HepG2 (cell line): ENCODE measurements at regions of chr17 and their contacts with region 1.

Region 1: DNA sequence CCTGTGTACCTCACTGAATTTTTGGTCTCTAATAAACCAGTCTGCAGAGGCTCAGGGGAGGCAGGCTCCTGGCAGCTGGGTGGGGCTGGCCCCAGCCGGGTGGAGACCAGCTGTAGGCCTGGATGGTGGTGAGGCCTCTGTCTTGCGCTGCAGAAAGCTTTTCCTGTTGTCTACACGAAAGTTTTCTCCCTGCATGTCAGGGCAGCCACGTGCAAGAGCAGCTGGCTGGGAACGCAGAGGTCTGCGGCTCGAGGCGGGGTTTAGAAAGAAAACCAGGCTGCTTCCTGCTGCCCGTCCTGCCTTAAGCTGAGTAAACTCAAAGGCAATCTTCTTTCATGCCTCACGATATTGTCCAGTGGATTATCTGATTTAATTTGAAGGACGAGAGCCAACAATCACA is 2.4 kb downstream of the SERPINF1 start:
- DNase-seq: no peak
- ATAC-seq: no peak
- H3K4me3 ChIP-seq: peak overlapping the region; percentile 33 to 94 (median 88); a peak in 5 of 6 replicates
- H3K27ac ChIP-seq: peak overlapping the region; percentile 99
- H3K4me1 ChIP-seq: peaks cover 64% of the 10 kb centered on the region
- H3K27me3 ChIP-seq: no peaks in the 10 kb centered on the region
- CTCF ChIP-seq: no peak
- EP300 ChIP-seq: no peak
- POLR2A ChIP-seq: 0 out of 4 replicates have a peak, but pooled peaks of 1 of the 2 experiments have one; percentile 18
- RAD21 ChIP-seq: no peak

Region 2: DNA sequence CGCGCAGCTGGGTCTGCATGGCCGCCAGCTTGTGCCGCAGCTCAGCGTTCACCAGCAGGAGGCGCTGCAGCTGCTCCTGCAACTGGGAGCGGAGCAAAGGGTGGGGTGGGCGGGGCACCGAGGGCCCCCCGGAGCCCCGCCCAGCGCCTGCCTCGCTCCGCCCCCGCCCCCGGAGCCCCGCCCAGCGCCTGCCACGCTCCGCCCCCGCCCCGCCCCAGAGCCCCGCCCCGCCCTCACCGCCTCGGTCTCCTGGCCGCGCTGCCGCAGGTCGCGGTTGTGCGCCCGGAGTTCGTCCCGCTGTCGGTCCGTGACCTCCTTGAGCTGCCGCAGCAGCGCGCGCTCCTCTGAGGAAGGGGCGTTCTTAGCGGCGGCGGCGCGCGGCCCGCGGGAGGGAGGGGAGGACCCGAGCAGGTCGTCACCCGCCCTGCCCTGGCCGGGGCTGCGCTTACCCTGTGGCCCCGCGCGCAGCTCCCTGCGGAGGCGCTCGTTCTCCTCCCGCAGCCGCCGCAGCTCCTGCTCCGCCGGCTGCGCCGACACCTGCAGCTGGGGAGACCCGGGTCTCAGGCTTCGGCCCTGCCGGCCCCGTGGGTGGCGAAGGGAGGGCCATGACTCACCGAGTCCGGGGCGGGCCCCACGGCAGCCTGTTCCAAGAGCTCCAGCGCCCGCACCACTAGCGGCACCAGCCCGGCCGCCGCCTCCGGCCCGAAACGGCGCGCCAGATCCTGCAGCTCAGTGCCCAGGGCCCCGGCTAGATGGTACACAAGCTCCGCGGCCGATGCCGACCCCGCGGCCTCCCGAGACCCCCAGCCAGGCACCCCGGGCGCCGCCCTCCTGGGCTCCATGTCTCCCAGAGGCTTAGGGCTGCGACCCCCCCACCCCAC is 115.1 kb before region 1 on chr17:
- CTCF ChIA-PET with region 1: no interaction called
- POLR2A ChIA-PET with region 1: interaction called, 26 read pairs
- in situ Hi-C with region 1: no loop called
- intact Hi-C with region 1: no loop called
- DNase-seq: peak; percentile 83
- ATAC-seq: peak; percentile 73
- H3K4me3 ChIP-seq: peak overlapping the region; percentile 74 to 83 (median 81)
- H3K27ac ChIP-seq: peak overlapping the region; percentile 93
- H3K4me1 ChIP-seq: peaks cover 64% of the 10 kb centered on the region
- H3K27me3 ChIP-seq: peaks cover 0 to 1% of the 10 kb centered on the region in 2 experiments; a peak in 1 of 5 replicates
- CTCF ChIP-seq: peak; percentile 85
- EP300 ChIP-seq: no peak; a peak in 1 of 4 replicates
- POLR2A ChIP-seq: peak; percentile 47 to 90; a peak in 3 of 4 replicates
- RAD21 ChIP-seq: peak; percentile 38

Region 3: DNA sequence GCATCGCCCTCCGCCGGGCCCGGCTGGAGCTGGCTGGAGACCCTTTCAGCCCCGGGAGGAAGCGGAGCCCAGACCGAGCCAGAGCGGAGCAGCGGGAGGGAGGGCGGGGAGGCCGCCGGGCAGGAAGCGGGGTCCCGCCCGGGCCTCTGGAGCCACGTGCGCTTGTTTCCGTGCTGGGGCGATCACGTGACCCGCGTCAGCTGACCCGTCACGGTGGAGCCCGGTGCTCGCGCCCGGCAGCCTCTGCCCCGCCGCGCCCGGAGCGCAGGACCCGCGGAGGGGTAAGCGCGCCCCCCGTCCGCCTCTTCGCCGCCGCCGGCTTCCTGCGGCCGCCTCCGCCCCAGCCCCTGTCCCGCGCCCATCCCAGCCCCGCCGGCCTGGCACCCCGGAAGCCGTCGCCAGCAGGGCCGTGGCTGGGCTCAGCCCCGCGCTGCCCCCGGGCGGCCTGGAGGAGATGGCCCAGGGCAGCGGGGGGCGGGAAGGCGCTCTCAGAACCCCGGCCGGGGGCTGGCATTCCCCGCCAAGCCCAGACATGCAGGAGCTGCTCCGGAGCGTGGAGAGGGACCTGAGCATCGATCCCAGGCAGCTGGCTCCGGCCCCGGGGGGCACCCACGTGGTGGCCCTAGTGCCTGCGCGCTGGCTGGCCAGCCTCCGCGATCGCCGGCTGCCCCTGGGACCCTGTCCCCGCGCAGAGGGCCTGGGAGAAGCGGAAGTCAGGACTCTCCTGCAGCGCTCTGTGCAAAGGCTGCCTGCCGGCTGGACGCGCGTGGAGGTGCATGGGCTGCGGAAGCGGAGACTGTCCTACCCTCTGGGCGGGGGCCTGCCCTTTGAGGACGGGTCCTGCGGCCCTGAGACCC is 39.5 kb before region 1 on chr17 and contains the start of gene WDR81:
- CTCF ChIA-PET with region 1: no interaction called
- POLR2A ChIA-PET with region 1: interaction called, 110 read pairs
- in situ Hi-C with region 1: loop called (anchors 5 kb)
- intact Hi-C with region 1: no loop called
- DNase-seq: peak; percentile 72
- ATAC-seq: peak; percentile 79
- H3K4me3 ChIP-seq: peak within 1 kb of the TSS; percentile 62 to 78 (median 64)
- H3K27ac ChIP-seq: peak within 1 kb of the TSS; percentile 77
- H3K4me1 ChIP-seq: peaks cover 72% of the 10 kb centered on the region
- H3K27me3 ChIP-seq: no peaks in the 10 kb centered on the region
- CTCF ChIP-seq: peak; percentile 32
- EP300 ChIP-seq: peak in 1 of 2 experiments; percentile 38; a peak in 1 of 4 replicates
- POLR2A ChIP-seq: peak in 1 of 2 experiments; percentile 46; a peak in 1 of 4 replicates
- RAD21 ChIP-seq: peak; percentile 42
- total RNA-seq, gene WDR81: 12.5 and 16.7 TPM in 2 replicates

Region 4: GRCh38 chr17:1736348-1737281 is 27.7 kb before region 1 on chr17:
- CTCF ChIA-PET with region 1: no interaction called
- POLR2A ChIA-PET with region 1: interaction called, 283 read pairs
- in situ Hi-C with region 1: no loop called
- intact Hi-C with region 1: no loop called
- DNase-seq: peak; percentile 98
- ATAC-seq: peak; percentile 92
- H3K4me3 ChIP-seq: peak overlapping the region in 2 of 3 experiments; percentile 57 to 60; a peak in 3 of 6 replicates
- H3K27ac ChIP-seq: peak overlapping the region; percentile 83
- H3K4me1 ChIP-seq: peaks cover 51% of the 10 kb centered on the region
- H3K27me3 ChIP-seq: no peaks in the 10 kb centered on the region
- CTCF ChIP-seq: peak; percentile 12
- EP300 ChIP-seq: peak; percentile 92 to 99
- POLR2A ChIP-seq: peak in 1 of 2 experiments; percentile 45; a peak in 1 of 4 replicates
- RAD21 ChIP-seq: peak; percentile 44

Region 5: GRCh38 chr17:1752425-1753262 is 11.6 kb before region 1 on chr17:
- CTCF ChIA-PET with region 1: no interaction called
- POLR2A ChIA-PET with region 1: interaction called, 174 read pairs
- in situ Hi-C with region 1: no loop called
- intact Hi-C with region 1: no loop called
- DNase-seq: no peak
- ATAC-seq: no peak
- H3K4me3 ChIP-seq: no peak overlapping the region
- H3K27ac ChIP-seq: peak overlapping the region; percentile 19
- H3K4me1 ChIP-seq: peaks cover 60% of the 10 kb centered on the region
- H3K27me3 ChIP-seq: no peaks in the 10 kb centered on the region
- CTCF ChIP-seq: no peak
- EP300 ChIP-seq: no peak
- POLR2A ChIP-seq: peak in 1 of 2 experiments; percentile 45; a peak in 3 of 4 replicates
- RAD21 ChIP-seq: no peak

Region 6: DNA sequence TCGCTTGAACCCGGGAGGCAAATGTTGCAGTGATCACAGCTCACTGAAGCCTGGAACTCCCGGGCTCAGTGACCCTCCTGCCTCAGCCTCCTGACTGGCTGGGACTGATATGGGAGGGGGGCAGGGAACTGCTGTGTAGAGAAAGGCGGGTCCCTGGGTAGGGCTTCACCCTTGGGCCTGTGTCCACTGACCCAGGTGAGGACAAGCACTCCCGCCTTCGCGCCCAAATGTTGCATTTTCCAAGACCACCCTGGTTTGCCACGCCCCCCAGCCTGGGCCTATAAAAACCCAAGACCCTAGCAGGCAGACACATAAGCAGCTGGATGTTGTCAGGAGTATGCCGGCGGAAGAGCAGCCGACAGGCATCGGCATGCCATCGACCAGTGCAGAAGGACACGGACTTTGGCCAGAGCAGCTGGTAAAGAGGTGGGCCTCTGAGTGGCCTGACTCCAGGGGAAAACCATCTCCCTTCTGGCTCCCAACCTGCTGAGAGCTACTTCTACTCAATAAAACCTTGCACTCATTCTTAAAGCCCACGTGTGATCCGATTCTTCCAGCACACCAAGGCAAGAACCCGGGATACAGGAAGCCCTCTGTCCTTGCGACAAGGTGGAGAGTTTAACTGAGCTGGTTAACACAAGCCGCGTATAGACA is 46.3 kb after region 1 on chr17:
- CTCF ChIA-PET with region 1: no interaction called
- POLR2A ChIA-PET with region 1: interaction called, 51 read pairs
- in situ Hi-C with region 1: no loop called
- intact Hi-C with region 1: no loop called
- DNase-seq: peak; percentile 87
- ATAC-seq: peak; percentile 100
- H3K4me3 ChIP-seq: peak overlapping the region in 2 of 3 experiments; percentile 0 to 57; a peak in 4 of 6 replicates
- H3K27ac ChIP-seq: peak overlapping the region; percentile 87
- H3K4me1 ChIP-seq: peaks cover 41% of the 10 kb centered on the region
- H3K27me3 ChIP-seq: no peaks in the 10 kb centered on the region
- CTCF ChIP-seq: 0 out of 2 replicates have a peak, but pooled peaks have one; percentile 6
- EP300 ChIP-seq: peak; percentile 25 to 66; a peak in 3 of 4 replicates
- POLR2A ChIP-seq: peak; percentile 80 to 89
- RAD21 ChIP-seq: peak; percentile 19

Region 7: GRCh38 chr17:1820528-1821252 is 56.4 kb after region 1 on chr17:
- CTCF ChIA-PET with region 1: no interaction called
- POLR2A ChIA-PET with region 1: no interaction called
- in situ Hi-C with region 1: no loop called
- intact Hi-C with region 1: no loop called
- DNase-seq: no peak
- ATAC-seq: no peak
- H3K4me3 ChIP-seq: no peak overlapping the region
- H3K27ac ChIP-seq: no peak overlapping the region
- H3K4me1 ChIP-seq: peaks cover 21% of the 10 kb centered on the region
- H3K27me3 ChIP-seq: no peaks in the 10 kb centered on the region
- CTCF ChIP-seq: no peak
- EP300 ChIP-seq: no peak
- POLR2A ChIP-seq: no peak
- RAD21 ChIP-seq: no peak